Ascending aorta (tissue), 2 donors: ENCODE measurements at regions of chr22 and their contacts with region 1.

Region 1: GRCh38 chr22:19750507-19751490 is 9.8 kb upstream of the TBX1 start:
- DNase-seq: no peak
- H3K4me3 ChIP-seq: no peak overlapping the region
- H3K27ac ChIP-seq: no peak overlapping the region
- H3K4me1 ChIP-seq: peaks cover 0 to 3% of the 10 kb centered on the region in 2 donors
- H3K27me3 ChIP-seq: peaks cover 5% of the 10 kb centered on the region
- CTCF ChIP-seq: no peak

Region 2: GRCh38 chr22:19886601-19887255 is 135.9 kb after region 1 on chr22:
- intact Hi-C with region 1: loop called (anchors 5 kb)
- DNase-seq: no peak
- H3K4me3 ChIP-seq: no peak overlapping the region
- H3K27ac ChIP-seq: no peak overlapping the region
- H3K4me1 ChIP-seq: peaks cover under 1 to 3% of the 10 kb centered on the region in 2 donors
- H3K27me3 ChIP-seq: no peaks in the 10 kb centered on the region
- CTCF ChIP-seq: no peak